ENCODE measurements at regions of chr10 and their contacts with region 1.

Region 1: DNA sequence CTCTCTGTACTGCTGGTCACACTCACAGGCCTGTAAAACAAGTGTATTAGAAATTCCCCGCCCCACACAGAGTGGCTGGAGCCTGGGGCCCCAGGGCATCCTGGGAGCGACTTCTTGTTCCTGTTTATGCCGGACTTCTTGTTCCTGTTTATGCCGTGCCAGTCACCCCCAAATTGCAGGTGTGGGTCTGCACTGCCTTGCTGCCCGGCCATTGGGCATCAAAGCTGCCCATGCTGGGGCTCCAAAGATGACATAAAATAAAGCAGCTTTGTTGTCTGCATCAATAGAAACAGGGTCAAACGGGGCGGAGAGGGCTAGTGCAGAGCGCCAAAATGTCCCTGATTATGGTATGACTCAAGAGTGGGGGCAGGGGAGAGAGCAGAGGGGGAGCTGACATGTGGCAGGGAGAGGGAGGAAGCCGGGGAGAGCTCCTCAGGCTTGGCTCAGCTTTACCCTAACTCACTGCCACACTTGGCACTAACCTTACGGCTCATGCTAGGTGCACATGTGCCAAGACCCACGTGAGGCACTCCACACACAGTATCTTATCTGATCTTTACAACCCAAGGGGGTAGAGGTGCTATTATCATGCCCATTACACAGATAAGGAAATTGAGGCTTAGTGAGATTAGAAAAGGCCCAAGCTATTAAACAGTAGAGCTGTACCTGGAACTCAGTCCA is 98.4 kb downstream of the PIP4K2A start:
- DNase-seq: peak in 13 of 35 experiments; percentile 10 to 70 (median 33)
- ATAC-seq: peak in 3 of 4 experiments; percentile 13 to 24 (median 17)
- H3K4me3 ChIP-seq: no peak overlapping the region
- H3K4me3 Mint-ChIP-seq: peak overlapping the region; percentile 57 to 64 (median 61)
- H3K27ac ChIP-seq: peak overlapping the region; percentile 93
- H3K27ac Mint-ChIP-seq: peak overlapping the region; percentile 96 to 99
- H3K4me1 ChIP-seq: peaks cover 72 to 75% of the 10 kb centered on the region in 2 experiments
- H3K4me1 Mint-ChIP-seq: peaks cover 87 to 97% (median 96%) of the 10 kb centered on the region in 3 donors
- H3K27me3 ChIP-seq: no peaks in the 10 kb centered on the region
- H3K27me3 Mint-ChIP-seq: no peaks in the 10 kb centered on the region

Region 2: DNA sequence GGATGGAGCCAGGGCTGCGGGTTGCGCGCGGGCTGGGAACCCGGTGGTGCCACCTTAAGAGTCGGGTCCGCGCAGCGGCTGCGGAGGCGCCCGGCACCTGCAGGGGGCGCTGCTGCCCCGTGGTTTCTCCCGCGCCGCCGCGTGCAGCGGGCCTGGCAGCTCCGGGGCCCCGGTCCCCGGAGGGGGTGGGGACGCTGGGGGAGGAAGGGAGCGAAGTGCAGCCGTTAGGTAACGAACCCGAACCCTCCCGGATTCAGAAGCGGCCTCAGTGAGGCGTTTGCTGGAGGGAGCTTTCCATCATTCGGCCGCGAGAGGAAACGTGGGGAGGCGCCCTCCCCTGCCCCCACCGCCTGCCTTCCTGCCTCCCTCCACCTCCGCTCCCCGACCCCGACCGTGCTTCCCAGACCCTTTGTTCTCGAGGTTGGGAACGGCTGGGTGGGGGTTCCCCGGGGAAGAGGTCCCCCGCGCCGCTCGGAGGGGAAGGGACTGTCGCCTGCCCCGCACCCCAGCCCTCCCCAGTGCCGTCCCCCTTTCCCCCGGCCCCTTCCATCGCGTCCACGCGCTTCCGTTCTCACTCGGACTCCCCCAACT is 1120.1 kb before region 1 on chr10:
- CTCF ChIA-PET with region 1: no interaction called
- POLR2A ChIA-PET with region 1: interaction called in 1 of 2 experiments, 11 read pairs
- DNase-seq: peak; percentile 66 to 92 (median 81)
- ATAC-seq: peak; percentile 85 to 89 (median 87)
- H3K4me3 ChIP-seq: peak overlapping the region; percentile 61 to 92
- H3K4me3 Mint-ChIP-seq: peak overlapping the region; percentile 82 to 88 (median 87)
- H3K27ac ChIP-seq: no peak overlapping the region
- H3K27ac Mint-ChIP-seq: peak overlapping the region in 1 of 2 donors; percentile 55
- H3K4me1 ChIP-seq: peaks cover 12 to 47% of the 10 kb centered on the region in 2 experiments
- H3K4me1 Mint-ChIP-seq: peaks cover 22 to 26% (median 25%) of the 10 kb centered on the region in 3 donors
- H3K27me3 ChIP-seq: peaks cover 0 to 55% of the 10 kb centered on the region in 2 experiments
- H3K27me3 Mint-ChIP-seq: peaks cover 33 to 56% of the 10 kb centered on the region in 2 donors

Region 3: DNA sequence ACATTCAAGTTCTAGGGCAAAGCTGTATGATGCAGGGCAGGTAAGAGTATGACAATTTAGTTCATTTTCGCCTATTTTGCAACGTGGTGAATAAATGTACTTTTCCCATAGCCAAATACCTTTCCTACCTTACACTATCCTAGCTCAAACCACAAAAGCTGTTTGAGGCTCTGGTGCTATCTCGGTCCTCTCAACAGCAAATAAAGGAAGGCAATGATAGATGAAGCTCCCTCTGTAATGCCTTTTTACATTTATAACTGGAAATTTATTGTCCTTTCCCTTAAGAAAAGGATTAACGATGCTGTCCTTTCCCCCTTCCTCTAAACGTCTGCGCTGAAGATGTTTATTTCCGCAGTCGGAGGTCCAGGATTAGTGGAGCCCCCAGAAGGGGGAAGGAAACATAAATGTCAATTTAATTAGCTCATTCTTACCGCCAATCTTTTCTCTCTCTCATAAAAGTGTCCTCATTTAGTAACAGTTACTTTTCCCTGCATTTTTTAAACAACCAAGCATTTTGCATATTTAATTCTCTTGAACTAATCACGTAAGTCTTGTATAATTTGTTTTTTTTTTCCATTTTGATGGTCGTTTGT is 16.2 kb before region 1 on chr10:
- CTCF ChIA-PET with region 1: interaction called in 1 of 2 experiments, 5 read pairs
- POLR2A ChIA-PET with region 1: interaction called, 4 to 12 read pairs
- DNase-seq: no peak
- ATAC-seq: no peak
- H3K4me3 ChIP-seq: no peak overlapping the region
- H3K4me3 Mint-ChIP-seq: no peak overlapping the region
- H3K27ac ChIP-seq: peak overlapping the region; percentile 77
- H3K27ac Mint-ChIP-seq: peak overlapping the region; percentile 85 to 91
- H3K4me1 ChIP-seq: peaks cover 20 to 82% of the 10 kb centered on the region in 2 experiments
- H3K4me1 Mint-ChIP-seq: peaks cover 73 to 92% (median 88%) of the 10 kb centered on the region in 3 donors
- H3K27me3 ChIP-seq: no peaks in the 10 kb centered on the region
- H3K27me3 Mint-ChIP-seq: no peaks in the 10 kb centered on the region

Region 4: GRCh38 chr10:22630234-22631174 is 14.5 kb after region 1 on chr10:
- CTCF ChIA-PET with region 1: interaction called, 4 to 12 read pairs
- POLR2A ChIA-PET with region 1: interaction called, 3 to 23 read pairs
- DNase-seq: peak in 6 of 35 experiments; percentile 26 to 84 (median 42)
- ATAC-seq: peak; percentile 89 to 90 (median 90)
- H3K4me3 ChIP-seq: peak overlapping the region in 1 of 2 donors; percentile 37
- H3K4me3 Mint-ChIP-seq: peak overlapping the region; percentile 58 to 79 (median 76)
- H3K27ac ChIP-seq: peak overlapping the region; percentile 94
- H3K27ac Mint-ChIP-seq: peak overlapping the region; percentile 94 to 98
- H3K4me1 ChIP-seq: peaks cover 58 to 70% of the 10 kb centered on the region in 2 experiments
- H3K4me1 Mint-ChIP-seq: peaks cover 96 to 98% (median 97%) of the 10 kb centered on the region in 3 donors
- H3K27me3 ChIP-seq: no peaks in the 10 kb centered on the region
- H3K27me3 Mint-ChIP-seq: no peaks in the 10 kb centered on the region

Region 5: GRCh38 chr10:22640359-22640758 is 24.4 kb after region 1 on chr10:
- CTCF ChIA-PET with region 1: interaction called in 1 of 2 experiments, 11 read pairs
- POLR2A ChIA-PET with region 1: interaction called in 1 of 2 experiments, 4 read pairs
- DNase-seq: no peak
- ATAC-seq: no peak
- H3K4me3 ChIP-seq: no peak overlapping the region
- H3K4me3 Mint-ChIP-seq: no peak overlapping the region
- H3K27ac ChIP-seq: no peak overlapping the region
- H3K27ac Mint-ChIP-seq: peak overlapping the region; percentile 28 to 75
- H3K4me1 ChIP-seq: peaks cover 37 to 74% of the 10 kb centered on the region in 2 experiments
- H3K4me1 Mint-ChIP-seq: peaks cover 83 to 92% (median 89%) of the 10 kb centered on the region in 3 donors
- H3K27me3 ChIP-seq: no peaks in the 10 kb centered on the region
- H3K27me3 Mint-ChIP-seq: no peaks in the 10 kb centered on the region

Region 6: DNA sequence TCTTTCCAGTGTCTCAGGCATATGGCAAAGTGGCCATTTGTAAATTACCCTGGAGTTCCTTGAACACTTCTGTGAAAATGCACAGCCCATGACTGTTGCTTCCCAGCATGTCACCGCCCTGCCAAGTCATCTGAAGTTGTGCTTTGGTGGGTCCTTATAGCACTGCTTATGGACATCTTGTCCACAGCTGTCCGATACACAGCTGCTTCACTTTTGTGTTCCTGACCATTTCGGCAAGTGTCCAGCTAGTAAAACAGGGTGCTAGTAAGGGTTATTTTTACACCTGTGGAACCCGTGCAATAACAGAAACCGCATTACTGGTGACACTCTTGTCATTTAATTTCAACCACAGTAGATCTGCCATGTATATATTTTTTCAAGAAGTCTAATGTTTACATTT is 68.7 kb after region 1 on chr10:
- CTCF ChIA-PET with region 1: no interaction called
- POLR2A ChIA-PET with region 1: no interaction called
- DNase-seq: no peak
- ATAC-seq: no peak
- H3K4me3 ChIP-seq: no peak overlapping the region
- H3K4me3 Mint-ChIP-seq: peak overlapping the region in 1 of 3 donors; percentile 75
- H3K27ac ChIP-seq: peak overlapping the region; percentile 94
- H3K27ac Mint-ChIP-seq: peak overlapping the region; percentile 92 to 97
- H3K4me1 ChIP-seq: peaks cover 79 to 83% of the 10 kb centered on the region in 2 experiments
- H3K4me1 Mint-ChIP-seq: peaks cover 90 to 92% (median 91%) of the 10 kb centered on the region in 3 donors
- H3K27me3 ChIP-seq: no peaks in the 10 kb centered on the region
- H3K27me3 Mint-ChIP-seq: no peaks in the 10 kb centered on the region

Measured in T-cell (primary cell).